ENCODE measurements at regions of chr22 and their contacts with region 1.

Region 1: DNA sequence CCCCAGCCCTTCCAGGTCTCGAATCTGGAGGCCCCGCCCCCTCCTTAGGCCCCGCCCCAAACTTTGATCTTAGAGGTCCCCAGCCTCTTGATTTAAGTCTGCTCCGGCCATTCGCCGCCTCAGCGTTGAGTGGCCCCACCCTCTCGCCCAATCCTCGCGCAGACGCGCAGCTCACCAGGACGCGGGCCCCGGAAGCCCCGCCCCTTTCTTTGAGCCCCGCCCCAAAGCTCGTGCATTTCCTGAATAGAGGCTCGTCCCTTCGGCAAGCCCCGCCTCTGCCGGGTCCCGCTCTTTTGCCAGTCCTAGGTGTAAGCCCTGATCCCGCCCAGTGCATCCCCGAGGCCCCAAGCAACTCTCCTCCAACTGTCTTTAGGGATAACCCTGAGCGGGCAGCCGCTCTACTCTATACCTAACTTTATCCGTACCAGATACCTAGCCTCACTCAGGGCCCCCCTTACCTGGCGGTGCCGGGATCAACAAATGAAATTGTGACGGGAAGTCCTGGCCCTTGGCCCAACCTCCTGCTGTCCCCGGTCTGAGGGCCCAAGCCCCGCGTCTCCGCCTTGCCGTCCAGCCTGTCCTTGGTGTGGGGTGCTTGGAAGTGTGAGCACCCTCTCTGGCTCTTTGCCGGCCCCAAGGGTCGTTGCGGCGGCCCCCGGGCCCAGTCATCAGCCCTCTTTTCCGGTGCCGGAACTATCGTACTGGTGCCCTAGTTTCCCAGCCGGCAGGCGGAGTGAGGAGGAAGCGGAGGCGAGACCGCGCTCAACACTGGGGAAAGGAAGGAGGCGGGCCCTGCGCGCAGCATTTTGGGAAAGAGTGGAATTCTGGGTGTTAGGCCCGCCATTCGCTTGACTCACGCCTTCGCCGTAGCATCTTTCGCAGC is at the start of gene SNRPD3:
- DNase-seq: peak; percentile 98
- H3K4me3 Mint-ChIP-seq: peak within 1 kb of the TSS; percentile 95
- H3K27ac Mint-ChIP-seq: peak within 1 kb of the TSS; percentile 98
- H3K4me1 Mint-ChIP-seq: peaks cover 47% of the 10 kb centered on the region
- H3K27me3 Mint-ChIP-seq: no peaks in the 10 kb centered on the region
- total RNA-seq, gene SNRPD3: 148 and 160 TPM in 2 replicates

Region 2: GRCh38 chr22:23913661-23914353 is 641.6 kb before region 1 on chr22:
- intact Hi-C with region 1: loop called (anchors 10 kb)
- DNase-seq: peak; percentile 100
- H3K4me3 Mint-ChIP-seq: peak overlapping the region; percentile 98
- H3K27ac Mint-ChIP-seq: peak overlapping the region; percentile 99
- H3K4me1 Mint-ChIP-seq: peaks cover 24% of the 10 kb centered on the region
- H3K27me3 Mint-ChIP-seq: peaks cover 3% of the 10 kb centered on the region

Region 3: GRCh38 chr22:24270638-24271408 is 284.6 kb before region 1 on chr22 and contains the start of gene SPECC1L:
- intact Hi-C with region 1: loop called (anchors 1 kb)
- DNase-seq: peak; percentile 90
- H3K4me3 Mint-ChIP-seq: peak within 1 kb of the TSS; percentile 83
- H3K27ac Mint-ChIP-seq: peak within 1 kb of the TSS; percentile 72
- H3K4me1 Mint-ChIP-seq: peaks cover 20% of the 10 kb centered on the region
- H3K27me3 Mint-ChIP-seq: no peaks in the 10 kb centered on the region
- total RNA-seq, gene SPECC1L: 35.9 and 40.9 TPM in 2 replicates

Region 4: GRCh38 chr22:24514241-24515026 is 41.0 kb before region 1 on chr22:
- intact Hi-C with region 1: no loop called
- DNase-seq: no peak
- H3K4me3 Mint-ChIP-seq: no peak overlapping the region
- H3K27ac Mint-ChIP-seq: no peak overlapping the region
- H3K4me1 Mint-ChIP-seq: peaks cover 27% of the 10 kb centered on the region
- H3K27me3 Mint-ChIP-seq: peaks cover 8% of the 10 kb centered on the region

Region 5: DNA sequence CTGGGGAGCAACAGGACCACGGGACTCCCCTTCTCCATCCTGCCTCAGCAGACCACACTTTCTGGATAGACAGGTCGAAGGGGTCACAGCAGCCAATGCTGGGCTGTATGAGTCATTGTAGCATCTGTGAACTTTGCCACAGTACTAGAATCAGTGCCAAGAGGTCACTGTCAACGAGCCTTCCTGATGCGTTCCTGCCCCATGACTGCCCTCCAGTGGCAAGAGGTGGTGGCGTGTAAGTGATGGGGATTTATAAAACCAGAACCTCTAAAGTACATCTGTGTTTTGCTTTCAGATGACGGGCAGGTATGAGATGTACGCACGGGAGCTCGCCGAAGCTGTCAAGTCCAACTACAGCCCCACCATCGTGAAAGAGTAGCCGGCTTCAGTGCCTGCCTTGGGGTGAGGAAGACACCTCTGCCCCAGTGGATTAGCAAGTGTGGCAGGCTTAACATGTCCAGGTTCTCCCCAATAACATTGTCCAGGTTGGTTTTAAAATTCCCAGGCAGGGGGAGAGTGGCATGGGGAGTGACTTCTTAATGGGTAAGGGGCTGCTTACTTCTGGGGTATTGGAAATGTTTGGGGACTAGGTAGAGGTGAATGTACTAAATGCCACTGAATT is 29.9 kb before region 1 on chr22:
- intact Hi-C with region 1: no loop called
- DNase-seq: peak; percentile 76
- H3K4me3 Mint-ChIP-seq: no peak overlapping the region
- H3K27ac Mint-ChIP-seq: no peak overlapping the region
- H3K4me1 Mint-ChIP-seq: peaks cover 11% of the 10 kb centered on the region
- H3K27me3 Mint-ChIP-seq: peaks cover 4% of the 10 kb centered on the region

Region 6: DNA sequence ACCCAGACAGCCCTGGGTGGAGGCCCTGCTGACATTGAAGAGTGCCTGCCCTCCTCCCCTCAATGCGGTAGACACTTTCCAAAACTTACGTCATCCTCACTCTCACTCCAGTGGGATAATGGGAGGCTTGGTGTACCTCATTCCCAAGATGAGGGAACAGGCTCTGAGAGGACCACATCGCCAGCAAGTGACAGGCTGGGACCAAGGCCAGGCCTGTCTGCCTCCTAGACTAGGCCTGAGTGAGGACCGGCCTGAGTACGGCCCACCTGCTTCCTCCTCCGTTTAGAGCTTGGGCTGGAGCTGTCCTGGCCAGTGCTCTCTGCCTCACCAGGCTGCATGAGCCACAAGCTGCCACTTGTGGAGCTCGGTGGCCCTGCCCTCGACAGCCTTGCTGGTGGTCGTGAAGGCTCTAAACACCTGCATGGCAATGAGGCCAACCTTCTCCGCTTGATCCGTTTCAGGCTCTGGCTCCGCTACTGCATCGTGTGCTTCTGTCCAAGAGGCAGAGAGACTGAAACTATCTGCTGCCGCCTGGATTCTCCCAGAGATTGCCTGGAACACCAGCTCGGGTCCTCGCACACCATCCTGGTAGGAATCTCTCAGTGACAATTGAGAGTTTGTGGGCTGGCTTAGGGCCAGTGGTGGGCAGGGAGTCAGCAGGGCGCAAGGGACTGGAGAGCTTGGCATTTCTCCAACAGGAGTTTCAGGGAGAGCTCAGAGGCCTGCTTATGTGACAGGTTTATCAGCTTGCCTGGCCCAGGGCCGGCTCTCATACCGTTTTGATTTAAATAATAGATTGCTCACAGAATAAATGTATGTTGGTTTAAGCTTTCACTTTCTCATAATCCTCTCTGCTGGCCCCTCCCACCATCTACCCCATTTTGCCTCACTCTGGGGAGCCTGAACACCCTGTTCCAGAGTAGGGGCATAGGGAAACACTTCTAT is 28.1 kb after region 1 on chr22:
- intact Hi-C with region 1: no loop called
- DNase-seq: no peak
- H3K4me3 Mint-ChIP-seq: no peak overlapping the region
- H3K27ac Mint-ChIP-seq: no peak overlapping the region
- H3K4me1 Mint-ChIP-seq: no peaks in the 10 kb centered on the region
- H3K27me3 Mint-ChIP-seq: no peaks in the 10 kb centered on the region

Region 7: GRCh38 chr22:24601217-24602104 is 46.1 kb after region 1 on chr22:
- intact Hi-C with region 1: loop called (anchors 5 kb)
- DNase-seq: no peak
- H3K4me3 Mint-ChIP-seq: no peak overlapping the region
- H3K27ac Mint-ChIP-seq: peak overlapping the region; percentile 70
- H3K4me1 Mint-ChIP-seq: peaks cover 31% of the 10 kb centered on the region
- H3K27me3 Mint-ChIP-seq: no peaks in the 10 kb centered on the region

Region 8: GRCh38 chr22:24867323-24868022 is 312.1 kb after region 1 on chr22:
- intact Hi-C with region 1: no loop called
- DNase-seq: no peak
- H3K4me3 Mint-ChIP-seq: no peak overlapping the region
- H3K27ac Mint-ChIP-seq: no peak overlapping the region
- H3K4me1 Mint-ChIP-seq: no peaks in the 10 kb centered on the region
- H3K27me3 Mint-ChIP-seq: no peaks in the 10 kb centered on the region

Measured in activated T-helper 2 cell treated with anti-CD3 and anti-CD28 coated beads, Interferon-gamma antibody, Interleukin-2, Interleukin-4, amounts not matched to agents 10 μg/mL and 5 μg/mL and 100 μg/mL, durations not matched to agents 14 hours and 24 hours and 36 hours (primary cell).